ENCODE measurements at regions of chr2 and their contacts with region 1.

Region 1: DNA sequence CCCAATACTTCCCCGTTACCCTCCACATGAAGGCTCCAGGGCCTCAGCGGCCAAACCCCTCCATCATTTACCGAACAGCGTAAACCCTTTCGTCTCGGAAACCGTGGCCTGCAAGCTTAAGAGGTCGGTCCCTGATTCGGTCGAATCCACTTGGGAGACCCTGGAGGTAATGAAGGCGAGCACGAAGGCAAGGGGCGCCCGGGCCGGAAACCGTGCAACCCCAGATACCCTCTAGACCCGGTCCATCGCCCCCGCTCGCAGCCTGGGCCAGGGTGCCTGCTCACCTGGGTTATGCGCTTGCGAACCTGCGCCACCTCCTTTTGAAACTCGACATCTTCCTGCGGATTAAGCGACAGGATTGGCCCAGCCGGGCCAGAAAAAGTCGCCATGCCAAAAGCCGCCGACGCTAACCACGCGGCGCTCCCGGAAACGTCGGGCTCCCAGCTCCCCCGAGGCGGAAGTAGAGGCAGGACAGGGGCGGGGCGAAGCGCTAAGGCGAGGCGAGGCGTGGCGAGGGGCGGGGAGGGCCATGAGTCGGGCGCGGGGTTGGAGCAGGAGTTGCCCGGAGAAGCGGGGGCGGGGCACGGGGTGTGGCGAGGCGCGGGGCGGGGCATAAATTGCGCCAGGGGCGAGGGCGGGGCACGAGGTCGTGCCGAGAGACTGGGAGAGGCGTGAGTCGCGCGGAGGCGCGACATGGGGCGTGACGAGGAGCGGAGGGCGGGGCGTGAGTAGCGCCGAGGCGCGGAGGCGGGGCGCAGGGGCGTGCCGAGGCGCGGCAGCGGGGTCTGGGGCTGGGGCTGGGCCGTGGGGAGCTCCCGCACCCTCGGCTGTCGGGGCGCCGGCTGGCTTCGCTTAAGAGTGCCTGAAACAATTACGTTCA is at the start of gene NIFK:
- DNase-seq: peak; percentile 99
- H3K4me3 Mint-ChIP-seq: peak within 1 kb of the TSS; percentile 99
- H3K27ac Mint-ChIP-seq: peak within 1 kb of the TSS; percentile 92
- H3K4me1 Mint-ChIP-seq: peaks cover 29% of the 10 kb centered on the region
- H3K27me3 Mint-ChIP-seq: no peaks in the 10 kb centered on the region
- total RNA-seq, gene NIFK: 117 and 125 TPM in 2 replicates

Region 2: GRCh38 chr2:121699421-121700333 is 37.0 kb before region 1 on chr2:
- intact Hi-C with region 1: loop called (anchors 1 kb)
- DNase-seq: peak; percentile 81
- H3K4me3 Mint-ChIP-seq: peak overlapping the region; percentile 75
- H3K27ac Mint-ChIP-seq: peak overlapping the region; percentile 91
- H3K4me1 Mint-ChIP-seq: peaks cover 46% of the 10 kb centered on the region
- H3K27me3 Mint-ChIP-seq: no peaks in the 10 kb centered on the region

Region 3: DNA sequence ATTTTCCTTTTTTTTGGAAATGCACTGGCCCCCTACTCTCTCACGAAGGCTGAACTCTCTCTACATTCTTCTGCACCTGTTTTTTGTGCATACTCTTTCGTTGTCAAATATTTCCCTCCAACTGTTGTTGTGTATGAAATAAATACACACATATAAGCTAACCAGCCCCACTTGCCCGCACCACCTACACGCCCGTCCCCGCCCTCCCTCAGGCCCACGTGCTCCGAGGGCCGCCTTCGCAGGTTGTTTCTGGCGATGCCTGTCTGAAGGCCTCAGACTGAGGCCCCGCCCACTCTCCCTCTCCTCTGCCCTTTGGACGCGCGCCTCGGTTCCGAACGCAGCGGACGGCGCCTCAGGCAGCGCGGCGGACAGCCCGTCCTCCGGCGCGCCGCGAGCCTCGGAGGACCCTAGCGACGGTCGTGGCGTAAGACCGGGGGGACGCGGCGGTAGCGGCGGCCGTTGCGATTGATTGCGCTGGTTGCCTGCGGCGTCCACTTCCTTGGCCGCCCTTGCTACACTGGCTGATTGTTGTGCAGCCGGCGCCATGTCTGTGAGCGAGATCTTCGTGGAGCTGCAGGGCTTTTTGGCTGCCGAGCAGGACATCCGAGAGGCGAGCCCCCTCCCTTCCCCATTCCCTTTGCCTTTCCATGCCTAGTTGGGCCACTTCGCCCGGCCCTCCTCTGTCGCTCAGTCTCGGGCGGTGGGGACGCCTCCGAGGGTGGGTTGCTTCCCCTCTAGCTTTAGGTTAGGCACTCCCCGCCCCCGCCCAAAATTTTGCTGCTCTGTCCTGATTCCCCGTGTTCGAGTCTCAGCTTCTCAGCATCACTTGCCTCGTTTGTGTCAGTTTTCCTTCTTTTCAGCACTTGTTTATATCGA is 18.8 kb after region 1 on chr2 and contains the start of gene TSN:
- intact Hi-C with region 1: loop called (anchors 1 kb)
- DNase-seq: peak; percentile 97
- H3K4me3 Mint-ChIP-seq: peak within 1 kb of the TSS; percentile 97
- H3K27ac Mint-ChIP-seq: peak within 1 kb of the TSS; percentile 91
- H3K4me1 Mint-ChIP-seq: peaks cover 22% of the 10 kb centered on the region
- H3K27me3 Mint-ChIP-seq: no peaks in the 10 kb centered on the region
- total RNA-seq, gene TSN: 67.6 and 72.5 TPM in 2 replicates